ENCODE measurements at regions of chr2 and their contacts with region 1.

Region 1: DNA sequence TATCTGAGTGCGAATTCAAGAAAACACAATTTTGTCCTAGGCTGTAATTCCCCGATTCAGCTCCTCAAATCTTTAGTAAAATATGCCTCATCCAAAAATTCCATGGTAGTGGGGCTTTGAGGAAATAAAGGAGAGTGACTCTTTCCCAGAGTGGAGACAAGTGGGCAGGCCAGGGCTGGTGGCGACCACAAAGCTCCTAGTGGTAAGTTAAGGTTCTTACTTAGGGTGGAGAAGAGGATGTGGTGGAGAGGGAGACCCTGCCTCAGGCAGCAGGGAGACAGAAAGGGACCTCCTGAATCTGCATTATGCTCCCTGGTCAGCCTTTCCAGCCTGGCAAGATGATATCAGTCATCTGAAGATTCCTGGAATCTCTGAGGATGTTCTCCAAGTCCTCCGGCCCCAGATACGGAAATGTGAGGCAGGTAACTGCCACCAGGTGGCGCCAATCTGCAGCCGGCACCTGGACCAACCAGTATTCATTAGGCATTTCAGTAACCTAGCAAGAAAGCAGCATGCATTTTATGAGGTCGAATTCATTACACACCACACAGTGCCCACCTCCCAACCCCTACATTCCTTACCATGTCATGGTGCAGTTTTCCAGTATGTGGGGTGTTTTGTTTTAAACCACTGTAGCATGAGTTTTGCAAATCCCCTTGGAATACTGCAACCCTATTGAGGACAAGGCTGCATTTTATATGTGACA is 106.4 kb downstream of the POLE4 start:
- DNase-seq: peak; percentile 61
- H3K4me3 Mint-ChIP-seq: no peak overlapping the region
- H3K27ac Mint-ChIP-seq: no peak overlapping the region
- H3K4me1 Mint-ChIP-seq: no peaks in the 10 kb centered on the region
- H3K27me3 Mint-ChIP-seq: no peaks in the 10 kb centered on the region

Region 2: GRCh38 chr2:74002487-74003391 is 1062.1 kb before region 1 on chr2:
- CTCF ChIA-PET with region 1: no interaction called
- intact Hi-C with region 1: no loop called
- DNase-seq: peak; percentile 39
- H3K4me3 Mint-ChIP-seq: peak overlapping the region; percentile 67
- H3K27ac Mint-ChIP-seq: peak overlapping the region; percentile 69
- H3K4me1 Mint-ChIP-seq: peaks cover 83% of the 10 kb centered on the region
- H3K27me3 Mint-ChIP-seq: no peaks in the 10 kb centered on the region

Region 3: GRCh38 chr2:75627895-75628504 is 563.2 kb after region 1 on chr2:
- CTCF ChIA-PET with region 1: no interaction called
- intact Hi-C with region 1: loop called (anchors 5 kb)
- DNase-seq: peak; percentile 79
- H3K4me3 Mint-ChIP-seq: no peak overlapping the region
- H3K27ac Mint-ChIP-seq: no peak overlapping the region
- H3K4me1 Mint-ChIP-seq: no peaks in the 10 kb centered on the region
- H3K27me3 Mint-ChIP-seq: peaks cover 18% of the 10 kb centered on the region